ENCODE measurements at regions of chr14 and their contacts with region 1.

Region 1: GRCh38 chr14:49461529-49462401 is 124.4 kb downstream of the RPS29 start:
- DNase-seq: peak in 1 of 2 donors; percentile 31
- ATAC-seq: no peak
- H3K4me3 ChIP-seq: no peak overlapping the region
- H3K27ac ChIP-seq: no peak overlapping the region
- H3K4me1 ChIP-seq: no peaks in the 10 kb centered on the region
- H3K27me3 ChIP-seq: peaks cover 0 to 20% (median 5%) of the 10 kb centered on the region in 7 donors
- CTCF ChIP-seq: peak; percentile 22 to 72 (median 58)

Region 2: GRCh38 chr14:49121246-49121645 is 340.5 kb before region 1 on chr14:
- intact Hi-C with region 1: no loop called
- DNase-seq: no peak
- ATAC-seq: no peak
- H3K4me3 ChIP-seq: no peak overlapping the region
- H3K27ac ChIP-seq: no peak overlapping the region
- H3K4me1 ChIP-seq: no peaks in the 10 kb centered on the region
- H3K27me3 ChIP-seq: no peaks in the 10 kb centered on the region
- CTCF ChIP-seq: no peak

Region 3: GRCh38 chr14:49497725-49498348 is 36.1 kb after region 1 on chr14:
- intact Hi-C with region 1: loop called in 1 of 10 experiments (anchors 5 kb)
- DNase-seq: peak in 1 of 2 donors; percentile 7
- ATAC-seq: peak in 1 of 8 donors; percentile 50
- H3K4me3 ChIP-seq: no peak overlapping the region
- H3K27ac ChIP-seq: no peak overlapping the region
- H3K4me1 ChIP-seq: no peaks in the 10 kb centered on the region
- H3K27me3 ChIP-seq: peaks cover 0 to 47% (median 13%) of the 10 kb centered on the region in 7 donors
- CTCF ChIP-seq: peak; percentile 56 to 86 (median 83)

Measured in heart right ventricle (tissue), 16 donors.